Prostate gland (tissue), 2 donors: ENCODE measurements at regions of chr1 and their contacts with region 1.

Region 1: DNA sequence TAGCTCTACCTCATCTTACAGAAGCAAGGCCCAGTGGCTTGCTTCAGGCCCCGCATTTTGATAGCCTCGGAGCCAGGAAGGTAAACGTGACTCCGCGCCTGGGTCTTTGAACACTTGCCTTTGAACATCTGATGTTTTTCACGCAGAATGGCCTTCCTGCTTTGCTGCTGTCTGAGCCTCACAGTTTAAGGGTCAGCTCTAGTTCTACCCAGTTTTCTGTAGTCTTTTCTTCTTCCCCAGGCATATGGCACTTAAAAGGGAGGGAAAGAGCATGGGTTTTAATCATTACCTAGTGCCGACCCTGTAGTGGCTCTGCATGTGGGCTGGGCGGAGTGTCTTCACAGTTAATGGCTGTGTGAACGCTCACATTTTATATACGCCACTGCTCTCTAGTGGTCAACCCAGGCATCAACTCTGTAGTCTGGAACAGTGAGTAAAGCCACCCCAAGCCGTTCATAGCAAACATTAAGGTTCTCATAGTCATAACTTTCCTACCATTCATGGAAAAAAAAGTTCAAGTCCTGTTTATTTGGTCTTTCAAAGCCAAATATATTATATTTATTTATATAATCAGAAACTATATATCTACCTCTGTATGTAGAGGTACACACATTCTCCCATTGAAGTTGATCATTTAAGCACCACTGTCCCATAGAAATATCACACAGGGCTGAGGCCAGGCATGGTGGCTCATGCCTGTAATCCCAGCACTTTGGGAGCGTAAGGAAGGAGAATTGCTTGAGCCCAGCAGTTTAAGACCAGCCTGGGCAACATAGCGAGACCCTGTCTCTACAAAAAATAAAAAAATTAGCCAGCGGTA is 78.1 kb downstream of the IER5 start:
- DNase-seq: peak; percentile 43
- H3K4me3 ChIP-seq: no peak overlapping the region
- H3K27ac ChIP-seq: no peak overlapping the region
- H3K4me1 ChIP-seq: no peaks in the 10 kb centered on the region
- H3K27me3 ChIP-seq: no peaks in the 10 kb centered on the region
- CTCF ChIP-seq: peak; percentile 40 to 85 (median 74)
- POLR2A ChIP-seq: no peak

Region 2: DNA sequence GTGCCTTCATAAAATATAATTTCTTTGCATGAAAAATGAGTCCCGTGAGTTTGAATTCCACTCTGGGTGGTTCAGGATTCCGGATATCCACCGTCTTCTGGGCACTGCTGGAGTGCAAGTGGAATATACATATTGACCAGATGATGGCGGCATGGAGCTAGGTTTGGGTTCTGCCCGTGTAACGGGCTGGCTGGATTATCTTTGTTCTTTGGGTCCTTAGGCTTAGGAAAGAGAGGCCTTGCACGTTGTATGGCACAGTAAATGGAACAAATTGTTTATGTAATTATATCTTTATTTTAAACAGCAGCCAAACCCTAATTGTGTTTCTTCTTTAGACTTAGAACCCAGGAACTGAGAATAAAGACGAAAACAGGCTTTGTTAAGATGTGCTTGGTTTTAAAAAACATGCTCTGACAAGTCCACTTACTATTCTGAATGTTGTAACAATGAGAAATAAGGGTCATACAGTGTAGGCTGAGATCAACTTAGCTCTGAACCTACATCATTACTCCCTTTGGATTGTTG is 650.7 kb before region 1 on chr1:
- intact Hi-C with region 1: loop called (anchors 10 kb)
- DNase-seq: peak; percentile 73
- H3K4me3 ChIP-seq: no peak overlapping the region
- H3K27ac ChIP-seq: no peak overlapping the region
- H3K4me1 ChIP-seq: no peaks in the 10 kb centered on the region
- H3K27me3 ChIP-seq: no peaks in the 10 kb centered on the region
- CTCF ChIP-seq: peak; percentile 43 to 83 (median 80)
- POLR2A ChIP-seq: no peak

Region 3: GRCh38 chr1:180881806-180882509 is 284.6 kb before region 1 on chr1:
- intact Hi-C with region 1: loop called (anchors 1 kb)
- DNase-seq: no peak
- H3K4me3 ChIP-seq: no peak overlapping the region
- H3K27ac ChIP-seq: no peak overlapping the region
- H3K4me1 ChIP-seq: no peaks in the 10 kb centered on the region
- H3K27me3 ChIP-seq: no peaks in the 10 kb centered on the region
- CTCF ChIP-seq: peak in 3 of 4 experiments; percentile 42 to 66 (median 53)
- POLR2A ChIP-seq: no peak